HAP-1 (cell line): ENCODE measurements at regions of chr1 and their contacts with region 1.

Region 1: GRCh38 chr1:145963995-145964901 is at the starts of genes ANKRD34A and POLR3GL:
- DNase-seq: peak; percentile 92 to 95
- H3K4me3 ChIP-seq: peak within 1 kb of the TSS; percentile 44
- H3K4me1 ChIP-seq: peaks cover 29% of the 10 kb centered on the region
- H3K27me3 ChIP-seq: no peaks in the 10 kb centered on the region

Region 2: DNA sequence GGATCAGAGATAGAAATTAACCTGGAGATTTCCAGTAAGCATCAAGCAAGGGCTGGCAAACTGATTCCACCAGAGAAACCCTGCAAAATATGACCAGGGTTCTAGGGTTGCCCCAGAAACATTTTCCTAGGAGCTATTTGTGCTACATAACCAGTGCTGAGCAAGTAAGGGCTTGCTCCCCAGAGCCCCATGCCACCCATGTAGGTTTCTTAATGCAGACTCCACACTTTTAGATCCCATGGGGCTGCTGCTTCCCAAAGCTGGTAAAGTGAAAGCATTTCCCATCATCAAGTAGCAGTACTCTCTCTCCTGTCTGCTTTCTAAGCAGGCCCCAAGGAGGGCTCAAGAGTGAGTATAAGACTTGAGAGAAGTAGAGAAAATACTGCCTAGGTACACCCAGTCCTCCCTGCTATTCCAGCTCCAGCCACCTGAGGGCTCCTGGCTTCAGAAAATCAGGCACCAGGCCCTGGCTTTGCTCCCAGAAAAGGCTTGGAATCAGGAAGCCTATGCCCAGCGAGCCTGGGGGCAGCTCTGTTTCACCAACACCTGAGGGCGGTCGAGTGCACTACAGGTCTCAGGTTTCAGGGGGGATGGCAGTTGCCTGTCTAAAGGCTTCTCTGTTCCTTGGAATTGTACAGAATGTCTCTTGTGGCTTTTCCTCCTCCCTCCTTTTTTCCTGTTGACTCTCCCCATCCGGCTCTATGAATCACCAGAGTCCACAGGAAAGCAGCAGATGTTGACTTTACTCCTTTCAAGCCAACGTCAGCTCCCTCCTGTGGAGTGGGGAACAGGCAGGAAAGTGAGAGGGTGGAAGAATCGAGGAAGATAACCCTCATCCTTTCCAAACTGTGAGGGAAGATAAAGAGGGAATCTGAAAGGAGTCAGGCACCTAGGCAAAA is 72.4 kb before region 1 on chr1:
- in situ Hi-C with region 1: no loop called
- DNase-seq: peak; percentile 93 to 97
- H3K4me3 ChIP-seq: no peak overlapping the region
- H3K4me1 ChIP-seq: peaks cover 15% of the 10 kb centered on the region
- H3K27me3 ChIP-seq: no peaks in the 10 kb centered on the region

Region 3: GRCh38 chr1:145927063-145927886 is 37.0 kb before region 1 on chr1 and contains the start of gene RBM8A:
- in situ Hi-C with region 1: loop called (anchors 5 kb)
- DNase-seq: peak; percentile 96
- H3K4me3 ChIP-seq: peak within 1 kb of the TSS; percentile 78
- H3K4me1 ChIP-seq: peaks cover 11% of the 10 kb centered on the region
- H3K27me3 ChIP-seq: no peaks in the 10 kb centered on the region